Spleen (tissue), 13 donors: ENCODE measurements at regions of chr16 and their contacts with region 1.

Region 1: GRCh38 chr16:11356573-11357331 is 11.5 kb downstream of the RMI2 start:
- DNase-seq: peak; percentile 88
- H3K4me3 ChIP-seq: no peak overlapping the region
- H3K27ac ChIP-seq: no peak overlapping the region
- H3K4me1 ChIP-seq: peaks cover 30 to 73% (median 46%) of the 10 kb centered on the region in 6 donors
- H3K27me3 ChIP-seq: peaks cover 0 to 56% (median 5%) of the 10 kb centered on the region in 7 donors
- CTCF ChIP-seq: peak; percentile 33 to 79 (median 69)
- POLR2A ChIP-seq: no peak

Region 2: DNA sequence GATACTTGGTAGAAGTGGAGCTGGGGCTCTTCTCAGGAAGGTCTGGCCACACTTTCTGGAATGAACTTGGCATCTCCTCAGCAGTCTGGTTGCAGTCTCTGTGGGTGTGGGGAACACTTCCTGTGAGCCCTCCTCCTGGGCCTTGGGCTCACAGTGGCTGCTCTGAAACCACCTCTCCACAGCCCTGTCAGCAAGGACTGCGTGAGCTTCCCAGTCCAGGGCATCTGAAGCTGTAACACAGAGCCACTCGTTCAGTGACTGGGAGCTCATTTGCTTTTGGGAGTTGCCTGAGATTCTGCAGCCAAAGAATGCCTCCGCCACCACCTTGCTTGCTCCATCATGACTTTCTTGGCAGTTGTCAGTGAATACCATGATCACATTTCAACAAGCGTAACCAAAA is 352.4 kb before region 1 on chr16:
- intact Hi-C with region 1: no loop called
- DNase-seq: no peak
- H3K4me3 ChIP-seq: no peak overlapping the region
- H3K27ac ChIP-seq: no peak overlapping the region
- H3K4me1 ChIP-seq: no peaks in the 10 kb centered on the region
- H3K27me3 ChIP-seq: no peaks in the 10 kb centered on the region
- CTCF ChIP-seq: no peak
- POLR2A ChIP-seq: no peak

Region 3: GRCh38 chr16:11094072-11094856 is 262.5 kb before region 1 on chr16:
- intact Hi-C with region 1: no loop called
- DNase-seq: no peak
- H3K4me3 ChIP-seq: no peak overlapping the region
- H3K27ac ChIP-seq: peak overlapping the region; percentile 23 to 79 (median 58)
- H3K4me1 ChIP-seq: peaks cover 20 to 62% (median 36%) of the 10 kb centered on the region in 6 donors
- H3K27me3 ChIP-seq: no peaks in the 10 kb centered on the region
- CTCF ChIP-seq: no peak
- POLR2A ChIP-seq: no peak

Region 4: DNA sequence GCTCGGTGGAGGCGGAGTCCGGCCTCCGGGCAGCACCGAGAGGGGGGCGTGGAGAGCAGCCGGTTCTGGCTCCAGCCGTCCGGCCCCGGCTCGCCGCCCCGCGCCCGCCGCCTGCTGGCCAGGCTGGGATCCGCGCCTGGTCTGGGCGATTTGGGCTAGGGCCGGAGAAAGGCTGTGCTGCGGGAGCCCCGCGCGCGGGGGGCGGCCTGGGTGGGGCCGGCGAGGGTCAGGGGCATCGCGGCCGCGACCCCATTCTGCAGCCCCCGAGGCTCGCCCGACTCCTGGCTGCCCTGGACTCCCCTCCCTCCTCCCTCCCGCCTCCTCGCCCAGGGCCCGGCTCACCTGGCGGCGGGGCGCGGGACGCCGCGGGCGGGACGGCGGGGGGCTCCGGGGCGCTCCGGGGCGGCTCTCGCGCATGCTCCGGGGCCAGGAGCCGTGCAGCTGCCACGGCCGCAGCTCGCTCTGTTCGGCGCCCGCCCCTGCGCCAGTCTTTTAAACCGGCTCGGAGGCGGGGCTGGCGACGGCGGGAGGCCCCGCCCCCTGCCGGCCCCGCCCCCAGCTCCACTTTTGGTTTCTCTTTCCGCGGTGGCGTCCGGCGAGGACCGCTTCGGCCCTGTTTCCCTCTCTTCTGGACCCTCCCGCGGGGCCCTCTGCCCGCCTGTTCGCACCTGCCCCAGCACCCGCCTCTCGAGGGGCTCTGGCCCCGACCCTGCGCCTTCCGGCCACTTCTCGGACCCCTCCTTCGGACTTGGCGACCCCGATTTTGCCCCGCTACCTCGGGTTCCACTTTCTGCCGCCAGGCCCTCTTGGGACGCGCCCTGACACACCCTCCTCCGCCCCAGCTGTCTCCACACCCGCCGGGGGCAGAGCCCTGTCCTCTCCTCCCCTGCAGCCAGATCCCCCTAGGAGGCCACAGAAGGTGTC is 100.8 kb before region 1 on chr16 and contains the start of gene SOCS1:
- intact Hi-C with region 1: loop called (anchors 5 kb)
- DNase-seq: peak; percentile 96
- H3K4me3 ChIP-seq: peak within 1 kb of the TSS; percentile 61 to 97 (median 89)
- H3K27ac ChIP-seq: peak within 1 kb of the TSS; percentile 85 to 99 (median 97)
- H3K4me1 ChIP-seq: peaks cover 31 to 76% (median 65%) of the 10 kb centered on the region in 6 donors
- H3K27me3 ChIP-seq: peaks cover 0 to 8% (median 0%) of the 10 kb centered on the region in 7 donors
- CTCF ChIP-seq: peak; percentile 79 to 97 (median 94)
- POLR2A ChIP-seq: peak; percentile 5 to 99 (median 82)
- total RNA-seq, gene SOCS1: 7.7 to 50.8 (median 24.0) TPM